Right cardiac atrium (tissue), 5 donors: ENCODE measurements at regions of chr9 and their contacts with region 1.

Region 1: GRCh38 chr9:124708633-124709291 is 62.3 kb downstream of the NR6A1 start:
- DNase-seq: no peak
- ATAC-seq: no peak
- H3K4me3 ChIP-seq: no peak overlapping the region
- H3K27ac ChIP-seq: no peak overlapping the region
- H3K4me1 ChIP-seq: no peaks in the 10 kb centered on the region
- H3K27me3 ChIP-seq: no peaks in the 10 kb centered on the region

Region 2: DNA sequence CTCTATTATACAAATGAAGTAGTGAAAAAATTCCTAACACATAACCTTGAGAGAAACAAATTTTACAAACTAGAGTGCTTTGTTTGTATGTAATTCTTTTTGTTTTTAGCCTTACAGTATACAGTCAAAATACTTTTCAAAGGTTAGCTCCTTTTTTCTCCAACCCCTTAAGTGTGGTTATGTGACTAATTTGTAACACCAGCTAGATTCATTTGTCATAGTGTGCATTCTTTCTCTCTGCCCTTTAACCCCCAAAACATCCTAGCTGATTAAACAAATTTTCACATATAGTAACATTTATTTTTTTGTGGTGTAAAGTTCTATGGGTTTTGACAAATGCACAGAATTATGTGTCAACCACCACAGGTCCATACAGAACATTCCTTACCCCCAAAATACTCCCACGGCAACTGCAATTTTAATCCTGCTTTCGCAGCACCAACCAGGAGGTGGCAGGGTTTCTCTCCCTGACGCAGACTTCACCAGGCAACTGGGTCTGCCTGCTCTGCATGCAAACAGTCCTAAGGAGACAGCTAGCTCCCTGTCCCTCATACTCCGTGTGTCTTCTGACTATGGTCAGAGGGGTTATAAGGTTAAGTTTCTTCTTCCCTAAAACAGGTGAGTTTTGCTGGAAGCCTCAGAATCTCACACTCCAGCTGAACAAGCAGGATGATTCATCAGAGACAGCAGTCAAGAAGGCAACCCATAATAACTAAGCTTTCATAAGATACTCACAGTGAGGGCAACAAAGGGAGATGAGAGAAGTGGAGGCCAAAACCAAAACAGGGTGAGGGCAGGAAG is 157.1 kb before region 1 on chr9:
- intact Hi-C with region 1: loop called in 1 of 4 experiments (anchors 5 kb)
- DNase-seq: peak in 2 of 3 donors; percentile 20 to 52
- ATAC-seq: peak; percentile 55 to 66
- H3K4me3 ChIP-seq: no peak overlapping the region
- H3K27ac ChIP-seq: no peak overlapping the region
- H3K4me1 ChIP-seq: no peaks in the 10 kb centered on the region
- H3K27me3 ChIP-seq: no peaks in the 10 kb centered on the region

Region 3: DNA sequence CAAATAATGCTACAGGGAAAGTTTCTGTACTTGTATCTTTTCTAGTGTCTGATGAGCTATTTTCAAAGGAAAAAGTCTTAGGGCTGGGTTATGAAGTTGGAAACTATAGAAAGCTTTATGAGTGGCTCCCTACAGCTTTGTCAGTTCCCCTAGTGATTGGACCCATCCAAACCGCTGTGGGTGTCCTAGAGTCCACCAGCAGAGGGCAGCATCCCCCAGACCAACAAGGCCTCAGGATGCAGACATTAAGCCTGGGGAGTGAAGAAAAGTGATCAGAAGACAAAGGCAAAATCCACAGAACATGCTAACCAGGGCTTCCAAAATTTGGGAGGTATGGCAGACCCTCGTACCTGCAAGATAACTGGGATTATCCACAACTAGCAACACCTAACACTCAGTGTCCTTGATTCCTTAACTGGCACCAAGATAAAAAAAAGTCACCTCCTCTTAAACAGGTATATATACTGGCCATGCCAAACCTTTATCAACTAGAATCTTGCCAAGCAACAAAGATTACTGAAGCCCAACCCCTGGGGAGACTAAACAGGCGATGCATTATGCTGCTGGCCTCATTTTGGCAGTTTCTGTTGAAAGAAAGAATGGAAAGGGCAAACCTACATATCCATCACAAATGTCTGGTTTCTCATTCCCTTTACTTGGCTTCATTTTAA is 91.2 kb before region 1 on chr9:
- intact Hi-C with region 1: loop called (anchors 1 to 5 kb)
- DNase-seq: peak; percentile 72 to 87 (median 85)
- ATAC-seq: peak; percentile 86 to 87
- H3K4me3 ChIP-seq: no peak overlapping the region
- H3K27ac ChIP-seq: no peak overlapping the region
- H3K4me1 ChIP-seq: no peaks in the 10 kb centered on the region
- H3K27me3 ChIP-seq: no peaks in the 10 kb centered on the region

Region 4: GRCh38 chr9:125143375-125144090 is 434.8 kb after region 1 on chr9 and contains the start of gene SCAI:
- intact Hi-C with region 1: no loop called
- DNase-seq: peak; percentile 99 to 100 (median 100)
- ATAC-seq: peak; percentile 100
- H3K4me3 ChIP-seq: peak within 1 kb of the TSS; percentile 93
- H3K27ac ChIP-seq: no peak within 1 kb of the TSS
- H3K4me1 ChIP-seq: no peaks in the 10 kb centered on the region
- H3K27me3 ChIP-seq: no peaks in the 10 kb centered on the region
- total RNA-seq, gene SCAI: 4.8 to 5.5 (median 4.9) TPM